Activated CD4-positive, alpha-beta T cell treated with anti-CD3 and anti-CD28 coated beads, Interleukin-2, amount 10 ng/mL, durations not matched to agents 7 days and 5 days (primary cell): ENCODE measurements at regions of chr3 and their contacts with region 1.

Region 1: GRCh38 chr3:10164546-10165393 is at the start of gene IRAK2:
- DNase-seq: peak; percentile 58
- H3K4me3 Mint-ChIP-seq: peak within 1 kb of the TSS; percentile 70
- H3K27ac Mint-ChIP-seq: peak within 1 kb of the TSS; percentile 66
- H3K4me1 Mint-ChIP-seq: peaks cover 36% of the 10 kb centered on the region
- H3K27me3 Mint-ChIP-seq: no peaks in the 10 kb centered on the region
- total RNA-seq, gene IRAK2: 1.6 to 1.9 TPM

Region 2: GRCh38 chr3:10177737-10178136 is 13.0 kb after region 1 on chr3:
- CTCF ChIA-PET with region 1: interaction called, 12 read pairs
- POLR2A ChIA-PET with region 1: no interaction called
- DNase-seq: no peak
- H3K4me3 Mint-ChIP-seq: no peak overlapping the region
- H3K27ac Mint-ChIP-seq: no peak overlapping the region
- H3K4me1 Mint-ChIP-seq: peaks cover 20% of the 10 kb centered on the region
- H3K27me3 Mint-ChIP-seq: no peaks in the 10 kb centered on the region